ENCODE measurements at regions of chr2 and their contacts with region 1.

Region 1: GRCh38 chr2:106098081-106098480 is 96.0 kb downstream of the UXS1 start:
- DNase-seq: no peak
- ATAC-seq: no peak
- H3K4me3 ChIP-seq: no peak overlapping the region
- H3K4me3 Mint-ChIP-seq: peak overlapping the region in 4 of 10 donors; percentile 1 to 36 (median 6)
- H3K27ac ChIP-seq: peak overlapping the region; percentile 80
- H3K27ac Mint-ChIP-seq: peak overlapping the region; percentile 25 to 97 (median 94)
- H3K4me1 ChIP-seq: peaks cover 41 to 47% of the 10 kb centered on the region in 2 donors
- H3K4me1 Mint-ChIP-seq: peaks cover 27 to 67% (median 55%) of the 10 kb centered on the region in 7 donors
- H3K27me3 ChIP-seq: no peaks in the 10 kb centered on the region
- H3K27me3 Mint-ChIP-seq: no peaks in the 10 kb centered on the region

Region 2: GRCh38 chr2:105369747-105370690 is 728.1 kb before region 1 on chr2:
- CTCF ChIA-PET with region 1: no interaction called
- POLR2A ChIA-PET with region 1: no interaction called
- intact Hi-C with region 1: loop called (anchors 2 kb)
- DNase-seq: peak; percentile 62 to 85 (median 80)
- ATAC-seq: peak; percentile 98
- H3K4me3 ChIP-seq: no peak overlapping the region
- H3K4me3 Mint-ChIP-seq: peak overlapping the region in 4 of 10 donors; percentile 2 to 49 (median 35)
- H3K27ac ChIP-seq: no peak overlapping the region
- H3K27ac Mint-ChIP-seq: peak overlapping the region in 2 of 9 donors; percentile 33 to 63
- H3K4me1 ChIP-seq: peaks cover 0 to 16% of the 10 kb centered on the region in 2 donors
- H3K4me1 Mint-ChIP-seq: peaks cover 7 to 24% (median 12%) of the 10 kb centered on the region in 7 donors
- H3K27me3 ChIP-seq: no peaks in the 10 kb centered on the region
- H3K27me3 Mint-ChIP-seq: peaks cover 0 to 2% (median 0%) of the 10 kb centered on the region in 5 donors

Region 3: GRCh38 chr2:105595536-105595935 is 502.5 kb before region 1 on chr2:
- CTCF ChIA-PET with region 1: no interaction called
- POLR2A ChIA-PET with region 1: no interaction called
- intact Hi-C with region 1: no loop called
- DNase-seq: no peak
- ATAC-seq: no peak
- H3K4me3 ChIP-seq: no peak overlapping the region
- H3K4me3 Mint-ChIP-seq: no peak overlapping the region
- H3K27ac ChIP-seq: no peak overlapping the region
- H3K27ac Mint-ChIP-seq: peak overlapping the region in 1 of 9 donors; percentile 74
- H3K4me1 ChIP-seq: peaks cover 0 to 4% of the 10 kb centered on the region in 2 donors
- H3K4me1 Mint-ChIP-seq: peaks cover 0 to 33% (median 27%) of the 10 kb centered on the region in 7 donors
- H3K27me3 ChIP-seq: no peaks in the 10 kb centered on the region
- H3K27me3 Mint-ChIP-seq: peaks cover 0 to 4% (median 0%) of the 10 kb centered on the region in 5 donors

Region 4: GRCh38 chr2:105737980-105738657 is 360.0 kb before region 1 on chr2:
- CTCF ChIA-PET with region 1: interaction called, 4 read pairs
- POLR2A ChIA-PET with region 1: interaction called, 7 read pairs
- intact Hi-C with region 1: loop called in 1 of 2 experiments (anchors 1 kb)
- DNase-seq: peak in 6 of 9 donors; percentile 56 to 77 (median 70)
- ATAC-seq: peak; percentile 88
- H3K4me3 ChIP-seq: peak overlapping the region; percentile 37
- H3K4me3 Mint-ChIP-seq: peak overlapping the region; percentile 54 to 84 (median 80)
- H3K27ac ChIP-seq: peak overlapping the region; percentile 74
- H3K27ac Mint-ChIP-seq: peak overlapping the region; percentile 90 to 99 (median 96)
- H3K4me1 ChIP-seq: peaks cover 40 to 41% of the 10 kb centered on the region in 2 donors
- H3K4me1 Mint-ChIP-seq: peaks cover 47 to 88% (median 83%) of the 10 kb centered on the region in 7 donors
- H3K27me3 ChIP-seq: no peaks in the 10 kb centered on the region
- H3K27me3 Mint-ChIP-seq: no peaks in the 10 kb centered on the region

Region 5: DNA sequence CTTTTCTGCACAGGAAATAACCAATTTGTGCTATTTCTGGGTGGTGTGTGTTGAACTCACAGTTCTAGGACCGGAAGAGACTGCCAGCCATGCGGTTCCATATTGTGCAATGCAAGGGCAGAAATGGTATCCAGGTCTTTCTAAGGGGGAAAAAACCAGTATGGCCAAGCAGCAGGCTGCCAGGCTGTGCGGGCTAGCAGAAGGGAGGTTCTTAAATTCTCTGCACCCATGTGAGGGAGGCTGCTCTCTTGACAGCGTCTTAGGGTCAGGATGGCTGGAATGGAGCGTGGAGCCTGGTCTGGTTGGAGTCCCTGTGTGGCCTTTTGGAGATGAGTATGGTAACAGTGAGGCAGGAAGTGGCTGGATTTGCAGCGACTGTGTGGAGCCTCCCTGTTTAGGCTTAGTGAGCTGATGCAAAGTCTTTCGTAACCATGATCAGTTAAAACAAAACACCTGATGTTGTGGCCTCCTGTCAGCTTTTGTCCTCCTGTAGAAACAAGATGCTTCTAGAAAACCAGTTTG is 300.7 kb before region 1 on chr2:
- CTCF ChIA-PET with region 1: interaction called, 3 read pairs
- POLR2A ChIA-PET with region 1: interaction called, 7 read pairs
- intact Hi-C with region 1: loop called (anchors 1 to 5 kb)
- DNase-seq: peak in 6 of 9 donors; percentile 37 to 58 (median 48)
- ATAC-seq: peak; percentile 33
- H3K4me3 ChIP-seq: peak overlapping the region; percentile 34
- H3K4me3 Mint-ChIP-seq: peak overlapping the region; percentile 70 to 92 (median 78)
- H3K27ac ChIP-seq: peak overlapping the region; percentile 74
- H3K27ac Mint-ChIP-seq: peak overlapping the region; percentile 92 to 100 (median 99)
- H3K4me1 ChIP-seq: peaks cover 92 to 93% of the 10 kb centered on the region in 2 donors
- H3K4me1 Mint-ChIP-seq: peaks cover 74 to 100% (median 94%) of the 10 kb centered on the region in 7 donors
- H3K27me3 ChIP-seq: no peaks in the 10 kb centered on the region
- H3K27me3 Mint-ChIP-seq: no peaks in the 10 kb centered on the region

Region 6: GRCh38 chr2:105935063-105935462 is 163.0 kb before region 1 on chr2:
- CTCF ChIA-PET with region 1: interaction called, 3 read pairs
- POLR2A ChIA-PET with region 1: interaction called, 13 read pairs
- intact Hi-C with region 1: loop called in 1 of 2 experiments (anchors 1 kb)
- DNase-seq: peak in 7 of 9 donors; percentile 40 to 73 (median 62)
- ATAC-seq: peak; percentile 86
- H3K4me3 ChIP-seq: peak overlapping the region; percentile 19
- H3K4me3 Mint-ChIP-seq: no peak overlapping the region
- H3K27ac ChIP-seq: peak overlapping the region; percentile 68
- H3K27ac Mint-ChIP-seq: no peak overlapping the region
- H3K4me1 ChIP-seq: peaks cover 39 to 54% of the 10 kb centered on the region in 2 donors
- H3K4me1 Mint-ChIP-seq: peaks cover 9 to 40% (median 30%) of the 10 kb centered on the region in 7 donors
- H3K27me3 ChIP-seq: no peaks in the 10 kb centered on the region
- H3K27me3 Mint-ChIP-seq: no peaks in the 10 kb centered on the region

Region 7: GRCh38 chr2:106078096-106078495 is 20.0 kb before region 1 on chr2:
- CTCF ChIA-PET with region 1: interaction called, 20 read pairs
- POLR2A ChIA-PET with region 1: interaction called, 23 read pairs
- intact Hi-C with region 1: loop called in 1 of 2 experiments (anchors 2 kb)
- DNase-seq: peak in 4 of 9 donors; percentile 25 to 36 (median 36)
- ATAC-seq: peak; percentile 56
- H3K4me3 ChIP-seq: no peak overlapping the region
- H3K4me3 Mint-ChIP-seq: peak overlapping the region in 9 of 10 donors; percentile 51 to 84 (median 79)
- H3K27ac ChIP-seq: peak overlapping the region; percentile 52
- H3K27ac Mint-ChIP-seq: peak overlapping the region in 8 of 9 donors; percentile 80 to 94 (median 88)
- H3K4me1 ChIP-seq: peaks cover 0 to 32% of the 10 kb centered on the region in 2 donors
- H3K4me1 Mint-ChIP-seq: peaks cover 11 to 82% (median 65%) of the 10 kb centered on the region in 7 donors
- H3K27me3 ChIP-seq: no peaks in the 10 kb centered on the region
- H3K27me3 Mint-ChIP-seq: peaks cover 0 to 8% (median 0%) of the 10 kb centered on the region in 5 donors

Region 8: DNA sequence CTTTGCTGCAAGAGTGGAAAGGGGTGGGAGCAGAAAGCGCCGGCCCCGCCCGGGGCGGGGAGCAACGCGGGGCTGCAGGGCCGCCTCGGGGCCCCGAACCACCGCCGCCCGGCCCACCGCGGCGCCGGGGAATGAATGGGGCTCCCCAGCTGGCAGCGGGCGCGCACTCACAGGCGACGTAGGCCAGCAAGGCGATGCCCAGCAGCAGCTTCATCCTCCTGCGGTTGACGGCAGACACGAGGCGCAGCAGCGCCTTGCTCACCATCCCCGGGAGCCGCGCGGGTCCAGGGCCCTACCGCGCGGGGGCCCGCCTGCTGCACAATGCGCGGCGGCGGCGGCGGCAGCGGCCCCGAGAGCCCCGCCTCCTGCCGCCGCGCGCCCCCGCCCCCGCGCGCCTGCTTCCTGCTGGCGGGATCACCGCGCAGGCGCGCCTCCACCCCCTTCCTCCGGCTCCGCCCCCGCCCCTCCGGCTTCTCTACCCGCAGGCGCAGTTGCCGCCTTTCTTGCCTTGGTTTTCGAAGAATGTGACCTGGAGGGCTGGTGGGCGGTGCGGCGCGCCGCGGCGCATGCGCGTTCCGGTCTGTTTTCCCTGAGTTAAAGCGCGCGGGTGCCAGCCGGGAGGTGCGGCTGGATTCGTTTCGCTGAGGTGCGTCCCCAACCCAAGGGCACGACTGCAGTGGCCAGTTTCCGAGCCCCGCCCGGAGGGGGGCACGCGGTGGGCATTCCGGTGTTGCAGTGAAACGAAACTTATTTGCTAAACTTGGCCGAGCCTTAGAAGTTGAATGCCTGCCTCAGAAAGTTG is 96.1 kb after region 1 on chr2 and contains the start of gene UXS1:
- CTCF ChIA-PET with region 1: interaction called, 6 read pairs
- POLR2A ChIA-PET with region 1: interaction called, 5 read pairs
- intact Hi-C with region 1: loop called (anchors 1 kb)
- DNase-seq: peak; percentile 97 to 98 (median 97)
- ATAC-seq: peak; percentile 86
- H3K4me3 ChIP-seq: peak within 1 kb of the TSS; percentile 98
- H3K4me3 Mint-ChIP-seq: peak within 1 kb of the TSS; percentile 84 to 99 (median 94)
- H3K27ac ChIP-seq: peak within 1 kb of the TSS; percentile 85
- H3K27ac Mint-ChIP-seq: peak within 1 kb of the TSS; percentile 71 to 96 (median 94)
- H3K4me1 ChIP-seq: peaks cover 17 to 43% of the 10 kb centered on the region in 2 donors
- H3K4me1 Mint-ChIP-seq: peaks cover 42 to 51% (median 48%) of the 10 kb centered on the region in 7 donors
- H3K27me3 ChIP-seq: no peaks in the 10 kb centered on the region
- H3K27me3 Mint-ChIP-seq: peaks cover 0 to 16% (median 0%) of the 10 kb centered on the region in 5 donors
- total RNA-seq, gene UXS1: 52.3 to 185 (median 93.3) TPM